ENCODE measurements at regions of chr7 and their contacts with region 1.

Region 1: DNA sequence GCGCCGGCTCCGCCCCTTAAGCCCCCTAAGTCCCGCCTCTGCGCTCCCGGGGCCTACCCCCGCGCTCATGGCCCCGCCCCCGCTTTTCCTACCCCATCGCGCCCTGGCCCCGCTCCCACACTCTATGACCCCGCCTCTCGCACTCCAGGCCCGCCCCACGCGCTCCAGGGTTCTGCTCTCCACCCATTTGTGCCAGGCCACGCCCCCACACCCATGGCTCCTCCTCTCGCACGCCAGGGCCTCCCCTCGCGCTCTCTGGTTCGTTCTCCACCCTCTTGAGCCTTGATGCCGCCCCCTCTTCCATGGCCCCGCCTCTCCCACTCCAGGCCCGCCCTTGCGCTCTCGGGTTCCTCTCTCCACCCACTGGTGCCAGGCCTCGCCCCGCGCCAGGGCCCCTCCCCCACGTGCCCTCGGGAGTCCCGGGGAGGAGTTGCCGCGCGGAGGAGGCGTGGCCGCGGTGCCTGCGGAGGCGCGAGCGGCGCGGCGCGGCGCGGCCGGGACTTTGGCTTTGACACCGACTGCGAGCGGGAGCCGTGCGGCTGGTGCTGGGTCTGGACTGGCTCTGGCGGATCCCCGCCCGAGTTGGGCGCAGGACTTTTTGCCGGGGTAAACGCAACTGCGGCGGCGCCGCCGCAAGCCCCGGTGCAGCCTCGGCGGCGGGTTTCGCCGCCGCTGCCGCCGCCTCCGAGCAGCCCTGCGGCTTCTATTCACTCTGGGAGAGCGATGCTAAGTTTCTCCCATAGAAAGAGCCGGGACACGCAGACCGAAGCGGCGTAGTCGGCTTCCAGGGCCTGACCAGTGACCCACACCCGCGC is at the start of gene EEPD1:
- DNase-seq: peak; percentile 98 to 100 (median 100)
- ATAC-seq: peak; percentile 94
- H3K4me3 ChIP-seq: peak within 1 kb of the TSS; percentile 60 to 73
- H3K4me3 Mint-ChIP-seq: peak within 1 kb of the TSS; percentile 87
- H3K27ac ChIP-seq: peak within 1 kb of the TSS; percentile 35 to 54
- H3K27ac Mint-ChIP-seq: peak within 1 kb of the TSS; percentile 25
- H3K4me1 ChIP-seq: peaks cover 12% of the 10 kb centered on the region
- H3K4me1 Mint-ChIP-seq: peaks cover 24% of the 10 kb centered on the region
- H3K27me3 ChIP-seq: no peaks in the 10 kb centered on the region
- H3K27me3 Mint-ChIP-seq: no peaks in the 10 kb centered on the region
- CTCF ChIP-seq: no peak
- total RNA-seq, gene EEPD1: 0.98 to 1.1 TPM

Region 2: GRCh38 chr7:35037526-35038339 is 1115.2 kb before region 1 on chr7:
- CTCF ChIA-PET with region 1: no interaction called
- POLR2A ChIA-PET with region 1: no interaction called
- intact Hi-C with region 1: loop called in 1 of 2 experiments (anchors 10 kb)
- DNase-seq: peak; percentile 76 to 96 (median 90)
- ATAC-seq: peak; percentile 71
- H3K4me3 ChIP-seq: peak overlapping the region; percentile 44 to 66
- H3K4me3 Mint-ChIP-seq: peak overlapping the region; percentile 89
- H3K27ac ChIP-seq: peak overlapping the region; percentile 26 to 49
- H3K27ac Mint-ChIP-seq: peak overlapping the region; percentile 80
- H3K4me1 ChIP-seq: peaks cover 25% of the 10 kb centered on the region
- H3K4me1 Mint-ChIP-seq: peaks cover 32% of the 10 kb centered on the region
- H3K27me3 ChIP-seq: no peaks in the 10 kb centered on the region
- H3K27me3 Mint-ChIP-seq: no peaks in the 10 kb centered on the region
- CTCF ChIP-seq: peak; percentile 74

Region 3: GRCh38 chr7:36286226-36286625 is 133.3 kb after region 1 on chr7:
- CTCF ChIA-PET with region 1: no interaction called
- POLR2A ChIA-PET with region 1: no interaction called
- intact Hi-C with region 1: loop called (anchors 1 to 5 kb)
- DNase-seq: peak; percentile 32 to 91 (median 67)
- ATAC-seq: peak; percentile 76
- H3K4me3 ChIP-seq: no peak overlapping the region
- H3K4me3 Mint-ChIP-seq: peak overlapping the region; percentile 74
- H3K27ac ChIP-seq: peak overlapping the region; percentile 63 to 71
- H3K27ac Mint-ChIP-seq: peak overlapping the region; percentile 94
- H3K4me1 ChIP-seq: peaks cover 57% of the 10 kb centered on the region
- H3K4me1 Mint-ChIP-seq: peaks cover 59% of the 10 kb centered on the region
- H3K27me3 ChIP-seq: no peaks in the 10 kb centered on the region
- H3K27me3 Mint-ChIP-seq: no peaks in the 10 kb centered on the region
- CTCF ChIP-seq: no peak

Region 4: DNA sequence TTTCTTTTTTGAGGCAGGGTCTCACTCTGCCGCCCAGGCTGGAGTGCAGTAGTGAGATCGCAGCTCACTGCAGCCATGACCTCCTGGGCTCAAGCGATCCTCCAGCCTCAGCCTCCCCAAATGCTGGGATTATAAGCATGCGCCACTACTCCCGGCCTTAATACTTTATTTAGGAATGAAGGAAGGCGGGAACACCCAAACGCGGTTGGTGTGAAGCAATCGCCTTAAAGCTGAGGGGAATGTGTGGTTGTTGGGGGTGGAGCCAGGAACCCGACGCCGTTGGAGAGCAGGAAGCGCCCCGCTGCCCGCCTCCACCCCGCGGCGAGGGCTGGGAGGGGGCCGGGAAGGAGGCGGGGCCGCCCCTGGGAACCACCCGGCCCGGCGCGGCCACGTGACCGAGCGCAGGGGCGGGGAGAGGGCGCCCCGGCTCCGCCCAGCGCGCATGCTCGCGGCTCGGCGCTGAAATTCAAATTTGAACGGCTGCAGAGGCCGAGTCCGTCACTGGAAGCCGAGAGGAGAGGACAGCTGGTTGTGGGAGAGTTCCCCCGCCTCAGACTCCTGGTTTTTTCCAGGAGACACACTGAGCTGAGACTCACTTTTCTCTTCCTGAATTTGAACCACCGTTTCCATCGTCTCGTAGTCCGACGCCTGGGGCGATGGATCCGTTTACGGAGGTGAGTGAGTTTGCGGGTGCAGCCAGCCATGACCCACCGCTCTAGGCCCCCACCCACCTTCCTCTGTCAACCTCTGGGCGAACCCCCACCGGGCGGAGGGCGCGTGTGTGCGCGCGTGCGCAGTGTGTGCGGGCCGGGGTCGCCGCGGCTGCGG is 236.6 kb after region 1 on chr7 and contains the start of gene ANLN:
- CTCF ChIA-PET with region 1: no interaction called
- POLR2A ChIA-PET with region 1: no interaction called
- intact Hi-C with region 1: loop called in 1 of 2 experiments (anchors 5 kb)
- DNase-seq: peak; percentile 67 to 93 (median 81)
- ATAC-seq: peak; percentile 94
- H3K4me3 ChIP-seq: peak within 1 kb of the TSS; percentile 76 to 80
- H3K4me3 Mint-ChIP-seq: peak within 1 kb of the TSS; percentile 84
- H3K27ac ChIP-seq: peak within 1 kb of the TSS in 1 of 2 experiments; percentile 74
- H3K27ac Mint-ChIP-seq: peak within 1 kb of the TSS; percentile 56
- H3K4me1 ChIP-seq: peaks cover 9% of the 10 kb centered on the region
- H3K4me1 Mint-ChIP-seq: peaks cover 20% of the 10 kb centered on the region
- H3K27me3 ChIP-seq: no peaks in the 10 kb centered on the region
- H3K27me3 Mint-ChIP-seq: no peaks in the 10 kb centered on the region
- CTCF ChIP-seq: no peak
- total RNA-seq, gene ANLN: 0.65 to 1.0 TPM

Region 5: GRCh38 chr7:37045681-37046179 is 892.8 kb after region 1 on chr7:
- CTCF ChIA-PET with region 1: no interaction called
- POLR2A ChIA-PET with region 1: no interaction called
- intact Hi-C with region 1: no loop called
- DNase-seq: no peak
- ATAC-seq: no peak
- H3K4me3 ChIP-seq: no peak overlapping the region
- H3K4me3 Mint-ChIP-seq: no peak overlapping the region
- H3K27ac ChIP-seq: no peak overlapping the region
- H3K27ac Mint-ChIP-seq: peak overlapping the region; percentile 27
- H3K4me1 ChIP-seq: no peaks in the 10 kb centered on the region
- H3K4me1 Mint-ChIP-seq: peaks cover 25% of the 10 kb centered on the region
- H3K27me3 ChIP-seq: no peaks in the 10 kb centered on the region
- H3K27me3 Mint-ChIP-seq: no peaks in the 10 kb centered on the region
- CTCF ChIP-seq: no peak